ENCODE measurements at regions of chr7 and their contacts with region 1.

Region 1: DNA sequence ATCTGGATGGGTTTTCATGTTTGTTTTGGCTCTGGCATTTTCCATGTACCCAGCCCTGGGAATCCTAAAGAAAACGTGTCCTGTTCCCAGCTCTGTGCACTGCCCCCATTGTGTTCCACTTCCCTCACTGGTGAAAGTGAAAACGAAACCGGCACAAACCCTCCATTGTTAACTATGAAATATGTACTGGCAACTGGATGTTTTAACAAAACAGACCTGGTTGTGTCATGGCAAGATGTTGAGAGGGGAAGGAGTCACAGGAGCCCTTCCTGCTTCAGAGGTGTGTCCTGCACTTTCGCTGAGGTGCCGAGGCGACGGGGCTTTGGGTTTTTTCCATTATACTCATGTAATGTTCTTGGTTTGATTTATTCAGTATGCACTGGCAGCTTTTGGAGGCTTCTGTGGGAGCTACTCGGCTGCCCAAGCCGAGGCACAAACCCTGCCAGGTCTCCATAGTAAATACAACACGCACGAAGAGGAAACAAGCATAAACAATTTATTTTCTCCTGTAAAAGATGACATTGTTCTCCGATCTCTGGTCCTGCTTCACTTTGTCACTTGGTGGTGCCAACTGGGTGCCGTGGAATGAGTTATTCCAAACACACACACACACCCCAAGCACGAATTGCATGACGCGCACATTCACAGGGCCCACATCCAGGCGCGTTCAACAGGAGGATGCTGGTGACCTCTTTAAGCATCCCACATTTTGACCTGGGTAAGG is 118.2 kb downstream of the CDK6 start:
- DNase-seq: peak in 1 of 2 donors; percentile 81
- H3K4me3 ChIP-seq: peak overlapping the region; percentile 61 to 71
- H3K27ac ChIP-seq: peak overlapping the region; percentile 91 to 92
- H3K4me1 ChIP-seq: peaks cover 4 to 14% of the 10 kb centered on the region in 2 donors
- H3K27me3 ChIP-seq: no peaks in the 10 kb centered on the region
- CTCF ChIP-seq: no peak

Region 2: DNA sequence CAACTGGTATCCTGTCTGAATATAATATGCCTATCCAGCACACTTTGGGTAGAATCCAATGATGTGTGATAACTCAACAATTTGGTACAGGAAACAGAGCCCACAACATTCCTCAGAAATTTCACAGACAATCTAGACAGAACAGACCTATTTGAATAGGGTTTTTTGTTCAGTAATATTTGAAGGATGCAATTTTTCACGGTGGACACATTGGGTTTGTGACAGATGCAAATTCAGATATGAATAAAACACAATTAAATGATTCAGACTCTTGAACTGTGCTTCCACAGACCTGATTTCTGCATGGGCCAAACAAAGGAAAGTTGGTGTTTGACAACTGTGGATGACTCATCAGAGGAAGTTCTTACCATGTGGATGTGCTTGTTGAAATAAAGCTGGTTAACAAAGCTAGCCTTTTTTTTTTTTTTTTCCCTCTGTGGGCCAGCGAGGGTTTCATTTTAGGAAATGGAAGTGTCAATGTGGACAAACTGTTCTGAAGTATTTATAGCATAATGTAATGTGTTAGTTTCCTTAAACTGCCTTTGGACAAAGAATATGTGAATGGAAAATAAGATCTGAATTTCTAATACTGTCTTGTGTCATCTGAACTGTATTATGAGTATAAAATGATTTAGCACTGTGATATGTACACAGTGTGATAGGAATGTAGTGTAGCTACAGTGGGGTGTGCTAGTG is 84.8 kb before region 1 on chr7:
- intact Hi-C with region 1: loop called (anchors 5 kb)
- DNase-seq: peak in 1 of 2 donors; percentile 73
- H3K4me3 ChIP-seq: no peak overlapping the region
- H3K27ac ChIP-seq: peak overlapping the region; percentile 56 to 76
- H3K4me1 ChIP-seq: peaks cover 0 to 38% of the 10 kb centered on the region in 2 donors
- H3K27me3 ChIP-seq: no peaks in the 10 kb centered on the region
- CTCF ChIP-seq: no peak

Region 3: DNA sequence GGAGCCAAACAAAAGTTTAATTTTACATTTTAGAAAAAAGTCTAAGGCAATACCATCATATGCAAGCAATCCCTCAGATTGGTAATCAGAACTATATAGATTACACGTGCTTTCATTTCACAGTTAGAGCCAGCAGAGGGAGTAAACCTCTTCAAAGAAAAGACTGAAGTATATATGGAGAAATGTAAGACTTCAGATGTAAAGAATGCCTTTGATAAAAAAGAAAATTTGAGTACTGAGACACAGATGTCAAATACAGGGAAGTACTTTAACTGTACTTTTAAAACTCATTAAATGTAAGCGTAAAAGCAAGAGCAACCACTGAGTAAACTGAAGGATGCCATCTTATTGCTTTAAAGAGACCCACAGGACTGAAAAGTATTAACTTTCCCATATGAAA is 26.6 kb before region 1 on chr7:
- intact Hi-C with region 1: no loop called
- DNase-seq: no peak
- H3K4me3 ChIP-seq: no peak overlapping the region
- H3K27ac ChIP-seq: no peak overlapping the region
- H3K4me1 ChIP-seq: peaks cover 0 to under 1% of the 10 kb centered on the region in 2 donors
- H3K27me3 ChIP-seq: no peaks in the 10 kb centered on the region
- CTCF ChIP-seq: peak; percentile 21 to 49 (median 35)

Region 4: DNA sequence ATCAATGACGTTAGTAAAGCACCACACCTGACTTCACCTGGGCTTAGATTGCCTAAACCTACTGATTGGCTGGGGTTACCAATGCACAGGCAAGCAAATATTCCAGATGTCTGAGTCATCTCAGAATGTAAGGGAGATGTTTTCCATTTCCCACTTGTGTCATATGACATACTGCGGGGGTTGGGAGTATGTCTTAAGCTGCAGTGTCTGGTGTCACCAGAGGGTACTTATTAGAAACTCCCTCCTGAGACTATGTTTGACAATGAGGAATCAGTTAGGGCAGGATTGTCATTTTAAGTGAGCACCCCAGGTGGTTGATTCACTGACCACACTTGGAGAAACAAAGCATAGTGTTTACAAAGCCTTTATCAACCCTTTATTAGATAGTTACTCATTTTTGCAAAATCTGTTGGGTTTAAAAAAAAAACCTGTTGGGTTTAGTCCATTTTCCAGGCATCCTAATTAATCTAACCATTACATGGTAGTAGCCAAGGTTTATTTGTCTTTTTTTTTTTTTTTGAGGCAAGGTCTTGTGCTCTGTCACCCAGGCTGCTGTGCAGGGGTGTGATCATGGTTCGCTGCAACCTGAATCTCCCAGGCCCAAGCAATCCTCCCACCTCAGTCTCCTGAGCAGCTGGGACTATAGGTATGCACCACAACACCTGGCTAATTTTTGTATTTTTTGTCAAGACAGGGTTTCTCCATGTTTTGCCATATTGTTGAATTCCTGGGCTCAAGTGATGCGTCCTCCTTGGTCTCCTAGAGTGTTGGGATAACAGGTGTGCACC is 45.7 kb after region 1 on chr7:
- intact Hi-C with region 1: loop called (anchors 5 kb)
- DNase-seq: no peak
- H3K4me3 ChIP-seq: no peak overlapping the region
- H3K27ac ChIP-seq: no peak overlapping the region
- H3K4me1 ChIP-seq: peaks cover 10 to 17% of the 10 kb centered on the region in 2 donors
- H3K27me3 ChIP-seq: no peaks in the 10 kb centered on the region
- CTCF ChIP-seq: no peak

Region 5: DNA sequence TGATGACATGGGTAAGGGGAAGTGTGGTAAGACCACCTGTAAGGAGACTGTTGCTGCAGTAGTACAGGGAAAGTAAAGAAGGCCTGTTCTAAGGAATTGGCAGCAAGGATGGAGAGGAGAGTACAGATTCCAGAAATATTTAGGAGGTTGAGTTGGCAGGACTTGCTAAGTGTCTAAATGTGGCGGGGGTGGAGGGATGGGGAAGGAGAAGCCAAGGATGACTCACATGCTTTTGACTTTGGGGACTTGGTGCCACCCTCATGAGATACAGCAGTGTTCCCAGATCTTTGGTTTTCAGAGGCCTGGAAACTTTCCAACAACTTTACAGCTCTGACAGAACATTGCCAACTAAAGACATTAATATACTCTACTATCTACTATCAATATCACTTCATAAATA is 72.8 kb after region 1 on chr7:
- intact Hi-C with region 1: loop called (anchors 5 kb)
- DNase-seq: peak in 1 of 2 donors; percentile 79
- H3K4me3 ChIP-seq: no peak overlapping the region
- H3K27ac ChIP-seq: peak overlapping the region; percentile 45 to 51
- H3K4me1 ChIP-seq: peaks cover 0 to 31% of the 10 kb centered on the region in 2 donors
- H3K27me3 ChIP-seq: no peaks in the 10 kb centered on the region
- CTCF ChIP-seq: no peak

Measured in ascending aorta (tissue), 2 donors.